ENCODE measurements at regions of chr9 and their contacts with region 1.

Region 1: DNA sequence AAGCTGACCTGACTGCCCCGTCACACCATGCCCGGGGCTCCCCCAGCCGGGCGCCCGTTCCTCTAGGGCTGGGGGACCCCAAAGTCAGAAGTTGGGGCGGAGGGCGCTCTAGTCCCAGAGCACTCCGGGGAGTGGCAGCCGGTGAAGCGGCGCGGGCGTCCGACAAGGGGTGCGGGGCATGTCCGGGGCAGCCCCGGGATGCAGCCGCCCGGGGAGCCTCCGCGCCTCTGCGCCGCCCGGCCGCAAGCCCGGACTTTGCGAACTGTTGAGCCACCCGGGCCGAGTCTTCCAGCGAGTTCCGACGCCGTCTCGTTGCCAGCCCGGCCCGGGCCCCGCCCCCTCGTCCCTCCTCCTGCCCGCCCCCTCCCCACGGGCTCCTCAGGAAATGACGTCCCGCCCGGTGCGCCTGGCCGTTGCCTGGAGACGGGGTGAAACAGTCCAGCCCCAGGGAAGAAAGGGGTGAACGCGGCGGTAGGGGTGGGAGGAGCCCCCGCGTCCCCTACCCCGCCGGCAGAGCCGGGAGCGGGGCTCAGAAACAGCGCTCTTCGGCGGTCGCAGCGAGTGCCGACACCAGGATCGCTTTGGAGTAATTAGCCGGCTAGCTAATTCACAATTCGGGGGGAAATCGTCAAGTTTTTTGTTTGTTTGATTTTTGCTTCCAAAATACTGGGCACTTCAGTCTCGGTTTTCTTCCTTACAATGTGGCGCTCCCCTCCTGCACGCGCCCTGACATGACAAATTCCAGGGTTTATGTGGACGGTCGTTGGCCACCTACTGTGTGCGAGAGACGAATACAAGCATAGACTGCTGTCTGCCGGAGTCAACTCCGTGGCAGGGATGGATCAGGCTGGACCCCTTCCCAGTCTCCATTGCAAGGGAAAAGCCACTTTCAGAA is at the start of gene WHRN:
- DNase-seq: peak; percentile 95
- ATAC-seq: peak; percentile 85
- H3K4me3 ChIP-seq: peak within 1 kb of the TSS; percentile 53 to 77 (median 65)
- H3K4me3 Mint-ChIP-seq: peak within 1 kb of the TSS; percentile 90
- H3K27ac ChIP-seq: peak within 1 kb of the TSS in 1 of 2 donors; percentile 62
- H3K27ac Mint-ChIP-seq: peak within 1 kb of the TSS; percentile 90
- H3K4me1 ChIP-seq: peaks cover 29 to 41% of the 10 kb centered on the region in 2 donors
- H3K4me1 Mint-ChIP-seq: peaks cover 43% of the 10 kb centered on the region
- H3K27me3 ChIP-seq: peaks cover 0 to 17% (median 9%) of the 10 kb centered on the region in 4 experiments
- H3K27me3 Mint-ChIP-seq: peaks cover 29% of the 10 kb centered on the region
- CTCF ChIP-seq: no peak
- total RNA-seq, gene WHRN: 95.7 and 96.6 TPM in 2 replicates

Region 2: DNA sequence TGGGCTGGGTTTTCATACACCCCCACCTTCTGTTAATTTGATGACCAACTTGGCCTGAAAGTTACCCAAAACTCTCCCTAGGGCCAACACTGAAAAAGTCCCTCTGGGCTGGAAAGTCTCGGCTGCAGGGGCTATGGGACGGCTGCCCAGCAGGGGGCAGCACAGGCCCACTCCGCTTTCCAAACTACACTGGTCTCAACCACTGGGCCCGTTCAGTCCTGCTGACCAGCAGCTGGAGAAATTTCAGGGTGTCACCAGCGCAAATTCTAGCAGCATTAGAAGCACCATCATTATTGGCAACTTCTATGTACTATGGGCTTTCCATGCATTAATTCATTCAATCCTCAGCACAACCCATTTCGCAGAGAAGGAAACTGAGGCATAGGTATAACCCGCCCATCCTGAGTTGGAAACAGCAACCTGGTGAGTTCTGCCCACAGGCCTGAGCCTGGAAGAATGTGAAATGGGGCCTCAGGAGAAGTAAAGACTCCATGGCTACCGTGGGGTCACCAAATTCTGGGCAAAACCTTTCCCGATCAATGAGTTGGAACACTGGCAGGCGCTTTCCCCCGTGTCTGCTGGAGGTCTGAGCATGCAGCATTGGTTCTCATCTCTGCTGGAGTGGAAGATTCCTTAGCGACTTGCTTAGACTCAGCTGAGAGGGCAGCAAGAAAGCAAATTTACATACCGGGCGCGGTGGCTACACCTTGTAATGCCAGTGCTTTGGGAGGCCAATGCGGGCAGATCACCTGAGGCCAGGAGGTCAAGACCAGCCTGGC is 166.1 kb before region 1 on chr9:
- CTCF ChIA-PET with region 1: interaction called, 18 read pairs
- POLR2A ChIA-PET with region 1: no interaction called
- intact Hi-C with region 1: loop called (anchors 1 kb)
- DNase-seq: peak; percentile 74
- ATAC-seq: peak; percentile 68
- H3K4me3 ChIP-seq: no peak overlapping the region
- H3K4me3 Mint-ChIP-seq: no peak overlapping the region
- H3K27ac ChIP-seq: peak overlapping the region in 1 of 2 donors; percentile 71
- H3K27ac Mint-ChIP-seq: peak overlapping the region; percentile 80
- H3K4me1 ChIP-seq: peaks cover 0 to 17% of the 10 kb centered on the region in 2 donors
- H3K4me1 Mint-ChIP-seq: peaks cover 37% of the 10 kb centered on the region
- H3K27me3 ChIP-seq: no peaks in the 10 kb centered on the region
- H3K27me3 Mint-ChIP-seq: no peaks in the 10 kb centered on the region
- CTCF ChIP-seq: peak; percentile 91

Region 3: GRCh38 chr9:114487607-114488300 is 17.7 kb before region 1 on chr9:
- CTCF ChIA-PET with region 1: interaction called, 29 read pairs
- POLR2A ChIA-PET with region 1: interaction called, 6 read pairs
- intact Hi-C with region 1: loop called (anchors 1 kb)
- DNase-seq: peak; percentile 81
- ATAC-seq: peak; percentile 75
- H3K4me3 ChIP-seq: no peak overlapping the region
- H3K4me3 Mint-ChIP-seq: no peak overlapping the region
- H3K27ac ChIP-seq: no peak overlapping the region
- H3K27ac Mint-ChIP-seq: peak overlapping the region; percentile 16
- H3K4me1 ChIP-seq: peaks cover 22 to 23% of the 10 kb centered on the region in 2 donors
- H3K4me1 Mint-ChIP-seq: peaks cover 40% of the 10 kb centered on the region
- H3K27me3 ChIP-seq: no peaks in the 10 kb centered on the region
- H3K27me3 Mint-ChIP-seq: no peaks in the 10 kb centered on the region
- CTCF ChIP-seq: peak; percentile 90

Region 4: GRCh38 chr9:114611516-114612271 is 106.3 kb after region 1 on chr9:
- CTCF ChIA-PET with region 1: interaction called, 6 read pairs
- POLR2A ChIA-PET with region 1: no interaction called
- intact Hi-C with region 1: loop called (anchors 2 kb)
- DNase-seq: no peak
- ATAC-seq: peak; percentile 61
- H3K4me3 ChIP-seq: peak overlapping the region; percentile 86 to 98 (median 88)
- H3K4me3 Mint-ChIP-seq: peak overlapping the region; percentile 95
- H3K27ac ChIP-seq: peak overlapping the region; percentile 82 to 89
- H3K27ac Mint-ChIP-seq: peak overlapping the region; percentile 84
- H3K4me1 ChIP-seq: peaks cover 65 to 73% of the 10 kb centered on the region in 2 donors
- H3K4me1 Mint-ChIP-seq: peaks cover 69% of the 10 kb centered on the region
- H3K27me3 ChIP-seq: no peaks in the 10 kb centered on the region
- H3K27me3 Mint-ChIP-seq: no peaks in the 10 kb centered on the region
- CTCF ChIP-seq: no peak